ENCODE measurements at regions of chr6 and their contacts with region 1.

Region 1: GRCh38 chr6:135568366-135568765 is 70.8 kb upstream of the AHI1 start:
- DNase-seq: peak in 33 of 35 experiments; percentile 8 to 68 (median 38)
- ATAC-seq: peak; percentile 45 to 98 (median 62)
- H3K4me3 ChIP-seq: no peak overlapping the region
- H3K4me3 Mint-ChIP-seq: no peak overlapping the region
- H3K27ac ChIP-seq: no peak overlapping the region
- H3K27ac Mint-ChIP-seq: no peak overlapping the region
- H3K4me1 ChIP-seq: peaks cover 4% of the 10 kb centered on the region in 2 experiments
- H3K4me1 Mint-ChIP-seq: peaks cover 4 to 15% (median 9%) of the 10 kb centered on the region in 3 donors
- H3K27me3 ChIP-seq: no peaks in the 10 kb centered on the region
- H3K27me3 Mint-ChIP-seq: no peaks in the 10 kb centered on the region

Region 2: GRCh38 chr6:135301304-135301703 is 267.1 kb before region 1 on chr6:
- CTCF ChIA-PET with region 1: no interaction called
- POLR2A ChIA-PET with region 1: interaction called in 1 of 2 experiments, 14 read pairs
- DNase-seq: no peak
- ATAC-seq: no peak
- H3K4me3 ChIP-seq: no peak overlapping the region
- H3K4me3 Mint-ChIP-seq: no peak overlapping the region
- H3K27ac ChIP-seq: no peak overlapping the region
- H3K27ac Mint-ChIP-seq: no peak overlapping the region
- H3K4me1 ChIP-seq: no peaks in the 10 kb centered on the region
- H3K4me1 Mint-ChIP-seq: no peaks in the 10 kb centered on the region
- H3K27me3 ChIP-seq: no peaks in the 10 kb centered on the region
- H3K27me3 Mint-ChIP-seq: no peaks in the 10 kb centered on the region

Region 3: GRCh38 chr6:135382182-135382628 is 186.2 kb before region 1 on chr6:
- CTCF ChIA-PET with region 1: no interaction called
- POLR2A ChIA-PET with region 1: no interaction called
- DNase-seq: no peak
- ATAC-seq: no peak
- H3K4me3 ChIP-seq: no peak overlapping the region
- H3K4me3 Mint-ChIP-seq: no peak overlapping the region
- H3K27ac ChIP-seq: no peak overlapping the region
- H3K27ac Mint-ChIP-seq: no peak overlapping the region
- H3K4me1 ChIP-seq: no peaks in the 10 kb centered on the region
- H3K4me1 Mint-ChIP-seq: no peaks in the 10 kb centered on the region
- H3K27me3 ChIP-seq: no peaks in the 10 kb centered on the region
- H3K27me3 Mint-ChIP-seq: no peaks in the 10 kb centered on the region

Measured in T-cell (primary cell).